Lower leg skin (tissue), 4 donors: ENCODE measurements at regions of chr5 and their contacts with region 1.

Region 1: DNA sequence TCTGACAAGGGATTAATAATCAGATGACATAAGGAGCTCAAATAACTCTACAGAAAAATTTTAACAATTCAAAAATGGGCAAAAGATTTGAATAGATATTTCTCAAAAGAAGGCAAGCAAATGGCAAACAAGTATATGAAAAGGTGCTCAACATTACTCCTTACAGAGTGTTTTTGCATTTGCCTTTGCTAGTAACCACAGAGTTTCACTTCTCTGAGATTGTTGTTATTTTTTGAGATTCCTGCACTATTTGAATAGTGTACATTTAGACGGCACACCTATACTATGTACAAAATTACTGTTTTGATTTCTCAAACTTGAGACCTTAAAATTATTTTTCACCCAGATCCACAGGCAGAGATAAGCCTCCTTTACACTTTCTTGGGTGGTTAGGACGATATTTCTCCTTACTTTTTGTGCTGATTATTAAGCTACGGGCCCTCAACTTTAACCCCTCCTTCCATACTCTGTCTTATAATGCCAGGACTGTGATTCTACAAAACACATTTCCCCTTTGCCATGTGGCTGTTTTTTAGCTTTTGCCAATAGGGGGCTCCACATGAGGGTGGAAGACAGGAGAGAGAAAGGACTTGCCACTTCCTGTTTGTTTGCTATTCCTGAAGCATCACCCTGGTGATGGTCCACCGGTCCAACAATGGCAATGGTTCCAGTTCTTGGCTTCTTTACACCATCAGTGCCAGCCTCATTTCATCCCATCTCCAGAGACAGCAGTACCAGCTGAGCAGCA is 65.0 kb upstream of the DAP start:
- DNase-seq: no peak
- H3K4me3 ChIP-seq: no peak overlapping the region
- CTCF ChIP-seq: no peak
- POLR2A ChIP-seq: no peak

Region 2: DNA sequence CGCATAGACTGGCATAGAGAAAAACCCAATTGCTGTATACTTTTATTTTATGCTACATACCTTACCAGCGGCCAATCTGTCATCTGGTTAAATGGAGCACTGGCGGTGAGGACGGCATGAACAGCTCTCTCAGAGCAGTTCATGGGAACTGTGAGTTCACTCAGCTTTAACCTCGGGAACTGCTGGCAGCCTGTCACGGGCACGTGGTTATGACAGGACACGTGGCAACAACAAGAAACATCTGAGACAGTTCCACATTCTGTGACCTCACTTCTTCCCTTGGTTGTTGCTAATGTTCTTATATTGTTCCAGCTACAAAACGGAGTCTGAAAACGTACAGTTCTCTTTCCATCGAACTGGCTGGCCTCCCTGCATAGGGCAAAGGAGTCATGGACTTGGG is 181.2 kb after region 1 on chr5:
- intact Hi-C with region 1: loop called (anchors 1 kb)
- DNase-seq: no peak
- H3K4me3 ChIP-seq: no peak overlapping the region
- CTCF ChIP-seq: no peak
- POLR2A ChIP-seq: no peak